Adrenal gland (tissue), 19 donors: ENCODE measurements at regions of chr1 and their contacts with region 1.

Region 1: DNA sequence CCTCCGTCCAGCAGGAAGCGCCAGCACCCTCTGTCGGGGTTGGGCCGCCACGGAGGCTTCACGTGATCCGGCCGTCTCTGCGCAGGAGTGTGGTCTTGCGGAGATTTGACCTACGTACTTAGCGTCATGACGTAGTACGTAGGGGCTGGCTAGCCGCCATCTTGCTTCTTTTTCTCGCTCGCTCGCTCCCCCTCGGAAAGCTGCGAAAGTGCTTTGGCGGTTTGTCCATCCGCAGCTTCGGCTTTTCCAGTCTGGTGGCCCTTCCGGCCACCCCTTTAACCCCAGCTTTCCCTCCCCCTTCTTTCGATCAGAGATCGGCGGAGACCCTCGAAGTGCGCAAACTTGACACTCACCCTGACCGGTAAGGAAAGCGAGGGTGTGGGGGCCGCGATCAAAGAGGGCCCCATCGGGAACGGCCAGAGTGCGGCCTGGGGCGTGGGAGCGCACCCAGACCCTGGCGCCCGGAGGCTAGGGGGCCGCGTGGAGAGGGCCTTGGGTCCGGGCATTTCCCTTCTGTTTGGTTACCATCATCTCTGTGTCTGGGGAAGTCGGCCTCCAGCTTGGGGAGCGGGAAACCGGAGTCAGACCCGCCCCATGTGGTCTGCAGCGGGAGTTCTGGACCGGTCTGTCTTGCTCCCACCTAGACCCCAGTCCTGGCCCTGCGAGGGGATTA is at the start of gene PRRC2C:
- DNase-seq: peak; percentile 97 to 99 (median 99)
- H3K4me3 ChIP-seq: peak within 1 kb of the TSS; percentile 55 to 97 (median 74)
- H3K27ac ChIP-seq: peak within 1 kb of the TSS; percentile 91 to 100 (median 99)
- H3K4me1 ChIP-seq: peaks cover 12 to 41% of the 10 kb centered on the region in 2 donors
- H3K27me3 ChIP-seq: no peaks in the 10 kb centered on the region
- CTCF ChIP-seq: peak in 5 of 6 experiments; percentile 18 to 88 (median 74)
- POLR2A ChIP-seq: peak in 1 of 2 donors; percentile 78
- total RNA-seq, gene PRRC2C: 47.8 to 103 (median 66.1) TPM

Region 2: GRCh38 chr1:171583581-171584201 is 98.2 kb after region 1 on chr1:
- intact Hi-C with region 1: loop called in 1 of 2 experiments (anchors 10 kb)
- DNase-seq: no peak
- H3K4me3 ChIP-seq: no peak overlapping the region
- H3K27ac ChIP-seq: no peak overlapping the region
- H3K4me1 ChIP-seq: no peaks in the 10 kb centered on the region
- H3K27me3 ChIP-seq: no peaks in the 10 kb centered on the region
- CTCF ChIP-seq: no peak
- POLR2A ChIP-seq: no peak

Region 3: GRCh38 chr1:171715813-171716251 is 230.3 kb after region 1 on chr1:
- intact Hi-C with region 1: loop called in 1 of 2 experiments (anchors 10 kb)
- DNase-seq: no peak
- H3K4me3 ChIP-seq: no peak overlapping the region
- H3K27ac ChIP-seq: no peak overlapping the region
- H3K4me1 ChIP-seq: peaks cover 0 to 12% of the 10 kb centered on the region in 2 donors
- H3K27me3 ChIP-seq: no peaks in the 10 kb centered on the region
- CTCF ChIP-seq: peak; percentile 35 to 61 (median 52)
- POLR2A ChIP-seq: no peak